ENCODE measurements at regions of chr11 and their contacts with region 1.

Region 1: DNA sequence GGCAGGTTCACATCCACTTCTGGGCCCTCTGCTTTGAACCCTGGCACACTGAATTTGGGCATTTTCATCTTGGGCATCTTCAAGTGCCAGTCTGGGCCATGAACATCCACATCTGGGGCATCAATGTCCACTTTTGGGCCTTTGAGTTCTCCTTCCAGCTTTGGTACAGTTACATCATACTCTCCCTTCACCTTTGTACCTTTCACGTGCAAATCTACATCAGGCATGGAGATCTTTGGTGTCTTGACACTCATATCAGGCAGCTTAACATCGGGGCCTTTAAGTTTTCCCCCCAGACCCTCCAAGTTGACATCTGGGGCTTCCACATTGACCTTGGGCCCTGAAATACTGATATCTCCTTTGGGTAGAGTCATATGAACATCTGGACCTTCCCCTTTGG is 14.5 kb downstream of the AHNAK start:
- DNase-seq: no peak
- H3K4me3 ChIP-seq: no peak overlapping the region
- H3K27ac ChIP-seq: no peak overlapping the region
- H3K4me1 ChIP-seq: no peaks in the 10 kb centered on the region
- H3K27me3 ChIP-seq: no peaks in the 10 kb centered on the region
- CTCF ChIP-seq: no peak

Region 2: GRCh38 chr11:62295504-62295903 is 236.6 kb before region 1 on chr11:
- CTCF ChIA-PET with region 1: no interaction called
- POLR2A ChIA-PET with region 1: no interaction called
- intact Hi-C with region 1: no loop called
- DNase-seq: peak in 1 of 2 experiments; percentile 28
- H3K4me3 ChIP-seq: no peak overlapping the region
- H3K27ac ChIP-seq: no peak overlapping the region
- H3K4me1 ChIP-seq: no peaks in the 10 kb centered on the region
- H3K27me3 ChIP-seq: peaks cover 64% of the 10 kb centered on the region
- CTCF ChIP-seq: no peak

Region 3: GRCh38 chr11:62479631-62480201 is 52.4 kb before region 1 on chr11:
- CTCF ChIA-PET with region 1: no interaction called
- POLR2A ChIA-PET with region 1: interaction called, 23 read pairs
- intact Hi-C with region 1: no loop called
- DNase-seq: no peak
- H3K4me3 ChIP-seq: peak overlapping the region; percentile 36; the same call in 1 of the 2 replicates
- H3K27ac ChIP-seq: peak overlapping the region; percentile 95
- H3K4me1 ChIP-seq: peaks cover 42% of the 10 kb centered on the region
- H3K27me3 ChIP-seq: no peaks in the 10 kb centered on the region
- CTCF ChIP-seq: no peak

Region 4: DNA sequence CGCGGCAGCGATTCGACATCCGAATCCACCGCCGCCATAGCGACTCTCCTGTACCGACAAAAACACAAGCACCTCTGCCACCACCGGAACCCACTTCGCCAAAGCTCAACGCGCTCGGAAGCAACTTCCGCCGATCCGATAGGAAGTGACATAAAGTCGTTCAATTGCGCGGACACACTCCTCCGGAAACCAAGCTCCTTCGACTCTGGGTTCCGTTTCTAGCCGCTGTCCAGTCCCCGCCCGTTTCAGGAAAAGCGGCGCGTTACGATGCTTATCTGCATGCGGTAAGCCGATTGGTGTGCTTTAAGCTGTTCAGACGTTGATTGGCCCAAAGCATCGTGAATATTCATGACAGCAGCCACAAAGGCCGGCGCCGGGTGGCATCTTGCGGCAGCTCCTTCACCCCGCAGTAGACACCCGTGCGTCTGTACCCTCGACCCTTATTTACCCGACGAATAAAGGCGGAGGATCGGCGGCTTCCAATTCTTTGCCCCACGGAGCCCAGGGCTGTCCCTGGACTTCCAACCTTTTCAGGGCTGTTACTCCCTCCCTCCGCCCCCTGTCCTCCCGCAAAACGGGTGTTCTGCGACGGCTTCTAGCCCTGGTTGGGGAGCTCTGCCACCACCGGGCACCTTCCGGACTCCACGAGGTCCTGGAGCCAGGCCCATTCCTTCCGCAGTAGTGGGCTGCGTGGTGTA is 59.5 kb after region 1 on chr11 and contains the start of gene TUT1:
- CTCF ChIA-PET with region 1: no interaction called
- POLR2A ChIA-PET with region 1: no interaction called
- intact Hi-C with region 1: no loop called
- DNase-seq: peak; percentile 98 to 100
- H3K4me3 ChIP-seq: peak within 1 kb of the TSS; percentile 84
- H3K27ac ChIP-seq: peak within 1 kb of the TSS; percentile 61
- H3K4me1 ChIP-seq: peaks cover 29% of the 10 kb centered on the region
- H3K27me3 ChIP-seq: no peaks in the 10 kb centered on the region
- CTCF ChIP-seq: no peak
- total RNA-seq, gene TUT1: 39.3 and 40.5 TPM in 2 replicates

Region 5: GRCh38 chr11:62645956-62646824 is 114.1 kb after region 1 on chr11 and contains the start of gene GANAB:
- CTCF ChIA-PET with region 1: no interaction called
- POLR2A ChIA-PET with region 1: no interaction called
- intact Hi-C with region 1: no loop called
- DNase-seq: peak; percentile 95 to 98
- H3K4me3 ChIP-seq: peak within 1 kb of the TSS; percentile 99
- H3K27ac ChIP-seq: peak within 1 kb of the TSS; percentile 48
- H3K4me1 ChIP-seq: peaks cover 15% of the 10 kb centered on the region; the same call in 1 of the 2 replicates
- H3K27me3 ChIP-seq: no peaks in the 10 kb centered on the region
- CTCF ChIP-seq: no peak
- total RNA-seq, gene GANAB: 478 and 525 TPM in 2 replicates

Measured in PC-9 (cell line).